Activated CD8-positive, alpha-beta T cell treated with anti-CD3 and anti-CD28 coated beads for 36 hours (primary cell): ENCODE measurements at regions of chr13 and their contacts with region 1.

Region 1: GRCh38 chr13:46354156-46355091 is 32.6 kb downstream of the RUBCNL start:
- DNase-seq: peak; percentile 52
- ATAC-seq: peak; percentile 91
- H3K4me3 Mint-ChIP-seq: no peak overlapping the region
- H3K27ac Mint-ChIP-seq: peak overlapping the region; percentile 31
- H3K4me1 Mint-ChIP-seq: peaks cover 16% of the 10 kb centered on the region
- H3K27me3 Mint-ChIP-seq: no peaks in the 10 kb centered on the region
- CTCF ChIP-seq: no peak

Region 2: DNA sequence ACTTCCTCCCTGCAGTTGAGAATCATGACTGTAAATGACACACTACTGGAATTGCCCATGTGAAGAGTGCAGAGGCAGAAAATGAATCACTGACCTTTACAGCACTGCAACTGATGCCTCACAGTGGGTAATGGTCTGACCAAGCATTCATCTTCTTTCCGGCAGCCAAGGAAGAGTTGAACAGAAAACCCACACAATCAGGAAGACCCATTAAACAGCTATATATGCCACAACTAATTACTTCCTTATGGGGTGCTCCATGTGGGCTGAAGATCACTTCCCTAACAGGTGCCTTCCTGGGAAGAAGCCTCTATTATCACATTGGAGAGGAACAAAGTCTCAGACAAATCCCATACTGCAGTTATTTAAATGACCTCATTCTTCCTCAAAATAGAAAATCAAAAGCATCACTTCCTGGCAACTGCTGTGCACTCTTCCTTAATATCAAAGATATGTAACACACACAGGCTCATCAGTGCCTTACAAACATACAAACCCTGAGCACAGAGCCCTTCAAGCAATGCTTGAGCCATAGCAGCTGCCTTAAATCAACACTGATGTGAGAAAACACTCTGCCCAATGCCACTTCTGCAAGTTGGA is 13.2 kb before region 1 on chr13:
- CTCF ChIA-PET with region 1: interaction called, 5 read pairs
- POLR2A ChIA-PET with region 1: no interaction called
- intact Hi-C with region 1: loop called (anchors 2 kb)
- DNase-seq: peak; percentile 63
- ATAC-seq: peak; percentile 97
- H3K4me3 Mint-ChIP-seq: peak overlapping the region; percentile 29
- H3K27ac Mint-ChIP-seq: peak overlapping the region; percentile 81
- H3K4me1 Mint-ChIP-seq: peaks cover 41% of the 10 kb centered on the region
- H3K27me3 Mint-ChIP-seq: no peaks in the 10 kb centered on the region
- CTCF ChIP-seq: no peak

Region 3: GRCh38 chr13:46378411-46378810 is 24.0 kb after region 1 on chr13:
- CTCF ChIA-PET with region 1: no interaction called
- POLR2A ChIA-PET with region 1: no interaction called
- intact Hi-C with region 1: no loop called
- DNase-seq: no peak
- ATAC-seq: no peak
- H3K4me3 Mint-ChIP-seq: no peak overlapping the region
- H3K27ac Mint-ChIP-seq: no peak overlapping the region
- H3K4me1 Mint-ChIP-seq: peaks cover 3% of the 10 kb centered on the region
- H3K27me3 Mint-ChIP-seq: peaks cover 5% of the 10 kb centered on the region
- CTCF ChIP-seq: no peak